PC-3 (cell line): ENCODE measurements at regions of chr6 and their contacts with region 1.

Region 1: DNA sequence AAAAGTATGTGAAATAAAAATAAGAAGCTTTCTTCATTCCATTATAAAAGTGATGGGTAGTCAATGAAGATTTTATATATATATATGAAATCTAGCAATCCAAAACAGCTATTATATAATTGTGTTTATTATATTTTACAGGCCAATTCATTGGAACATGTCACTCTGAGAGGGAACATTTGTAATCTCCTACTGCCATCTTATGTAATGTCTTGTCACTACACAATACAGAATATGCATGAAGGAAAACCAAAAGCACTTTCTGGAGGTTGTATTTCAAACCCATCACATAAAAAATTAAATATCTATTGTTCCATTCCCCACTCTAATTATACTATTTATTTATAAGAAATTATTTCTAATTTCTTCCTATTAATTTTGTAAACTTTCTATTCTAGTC is 31.5 kb upstream of the IRAK1BP1 start:
- DNase-seq: peak; percentile 35
- ATAC-seq: no peak
- H3K4me3 ChIP-seq: no peak overlapping the region
- H3K27ac ChIP-seq: no peak overlapping the region
- H3K4me1 ChIP-seq: no peaks in the 10 kb centered on the region
- H3K27me3 ChIP-seq: no peaks in the 10 kb centered on the region
- CTCF ChIP-seq: peak; percentile 31; the same call in 1 of the 2 replicates

Region 2: GRCh38 chr6:77740380-77740779 is 1095.4 kb before region 1 on chr6:
- CTCF ChIA-PET with region 1: no interaction called
- POLR2A ChIA-PET with region 1: no interaction called
- intact Hi-C with region 1: loop called (anchors 10 kb)
- DNase-seq: peak; percentile 37
- ATAC-seq: no peak
- H3K4me3 ChIP-seq: no peak overlapping the region
- H3K27ac ChIP-seq: no peak overlapping the region
- H3K4me1 ChIP-seq: no peaks in the 10 kb centered on the region
- H3K27me3 ChIP-seq: no peaks in the 10 kb centered on the region
- CTCF ChIP-seq: peak; percentile 55

Region 3: GRCh38 chr6:78436335-78436734 is 399.5 kb before region 1 on chr6:
- CTCF ChIA-PET with region 1: no interaction called
- POLR2A ChIA-PET with region 1: no interaction called
- intact Hi-C with region 1: loop called (anchors 10 kb)
- DNase-seq: peak; percentile 44
- ATAC-seq: peak; percentile 27
- H3K4me3 ChIP-seq: no peak overlapping the region
- H3K27ac ChIP-seq: no peak overlapping the region
- H3K4me1 ChIP-seq: no peaks in the 10 kb centered on the region
- H3K27me3 ChIP-seq: no peaks in the 10 kb centered on the region
- CTCF ChIP-seq: peak; percentile 51

Region 4: DNA sequence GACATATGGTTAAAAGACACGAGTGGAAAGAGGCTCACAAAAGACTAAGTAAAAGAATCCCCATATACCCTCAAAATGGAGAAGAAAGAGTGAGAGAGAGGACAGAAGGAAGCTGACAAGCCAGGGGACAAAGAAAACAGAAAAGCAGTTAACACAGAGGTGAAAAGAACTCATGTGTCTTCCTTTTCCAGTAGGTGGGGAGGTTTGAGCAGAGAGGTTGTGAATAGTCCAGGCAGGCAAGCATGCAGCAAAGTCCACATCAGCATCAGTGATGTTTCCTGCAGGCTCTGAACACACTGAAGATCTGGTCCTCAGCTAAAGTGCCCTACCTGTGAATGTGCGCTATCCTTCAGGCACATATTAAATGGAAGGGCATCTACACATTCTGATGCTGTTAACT is 165.0 kb before region 1 on chr6:
- CTCF ChIA-PET with region 1: no interaction called
- POLR2A ChIA-PET with region 1: no interaction called
- intact Hi-C with region 1: no loop called
- DNase-seq: no peak
- ATAC-seq: no peak
- H3K4me3 ChIP-seq: no peak overlapping the region
- H3K27ac ChIP-seq: no peak overlapping the region
- H3K4me1 ChIP-seq: no peaks in the 10 kb centered on the region
- H3K27me3 ChIP-seq: no peaks in the 10 kb centered on the region
- CTCF ChIP-seq: no peak

Region 5: GRCh38 chr6:78768271-78768670 is 67.5 kb before region 1 on chr6:
- CTCF ChIA-PET with region 1: no interaction called
- POLR2A ChIA-PET with region 1: no interaction called
- intact Hi-C with region 1: no loop called
- DNase-seq: no peak
- ATAC-seq: no peak
- H3K4me3 ChIP-seq: no peak overlapping the region
- H3K27ac ChIP-seq: no peak overlapping the region
- H3K4me1 ChIP-seq: no peaks in the 10 kb centered on the region
- H3K27me3 ChIP-seq: no peaks in the 10 kb centered on the region
- CTCF ChIP-seq: no peak